HEK293 (cell line): ENCODE measurements at regions of chr11 and their contacts with region 1.

Region 1: GRCh38 chr11:62665075-62665598 is at the starts of genes C11orf98 and CSKMT:
- H3K4me3 ChIP-seq: peak within 1 kb of the TSS; percentile 89
- H3K27ac ChIP-seq: peak within 1 kb of the TSS; percentile 66
- H3K4me1 ChIP-seq: no peaks in the 10 kb centered on the region
- CTCF ChIP-seq: no peak

Region 2: DNA sequence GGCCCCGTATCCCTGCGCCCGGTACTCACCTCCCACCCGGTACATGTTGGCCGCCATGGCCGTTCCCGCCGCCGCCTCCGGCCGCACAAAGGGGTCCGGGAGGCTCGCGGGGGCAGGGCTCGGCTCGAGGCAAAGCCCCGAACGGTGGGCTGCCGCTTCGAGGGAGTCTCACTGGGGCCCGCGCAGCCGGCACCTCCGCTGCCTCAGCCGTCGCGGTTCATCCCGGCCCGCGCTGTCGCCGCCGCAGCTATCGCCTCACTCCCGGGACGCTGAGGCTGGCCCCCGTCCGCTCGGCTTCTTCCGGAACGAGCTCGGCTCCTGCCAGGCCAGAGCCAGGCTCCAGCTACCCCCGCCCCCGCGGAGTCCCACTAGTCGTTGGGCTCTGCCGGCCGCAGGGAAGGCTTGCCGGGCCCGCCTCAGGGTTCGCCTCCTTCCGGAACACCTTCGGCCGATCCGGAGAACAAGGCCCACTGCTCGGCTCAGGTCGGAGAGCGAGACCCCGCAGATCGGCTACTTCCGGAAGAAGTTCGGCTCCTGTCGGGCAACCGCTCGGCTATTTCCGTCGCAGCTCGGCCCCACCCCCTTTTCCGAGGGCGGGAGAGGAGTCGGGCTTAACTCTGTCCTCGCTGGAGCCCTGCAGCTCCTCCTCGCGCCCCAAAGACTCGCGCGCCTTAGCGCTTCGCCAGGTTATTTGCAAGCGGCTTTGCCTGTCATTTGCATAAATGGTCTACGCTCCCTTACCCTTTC is 63.6 kb before region 1 on chr11 and contains the start of gene MTA2:
- CTCF ChIA-PET with region 1: no interaction called
- POLR2A ChIA-PET with region 1: interaction called, 20 read pairs
- H3K4me3 ChIP-seq: peak within 1 kb of the TSS; percentile 91
- H3K27ac ChIP-seq: peak within 1 kb of the TSS; percentile 95
- H3K4me1 ChIP-seq: no peaks in the 10 kb centered on the region
- CTCF ChIP-seq: no peak

Region 3: DNA sequence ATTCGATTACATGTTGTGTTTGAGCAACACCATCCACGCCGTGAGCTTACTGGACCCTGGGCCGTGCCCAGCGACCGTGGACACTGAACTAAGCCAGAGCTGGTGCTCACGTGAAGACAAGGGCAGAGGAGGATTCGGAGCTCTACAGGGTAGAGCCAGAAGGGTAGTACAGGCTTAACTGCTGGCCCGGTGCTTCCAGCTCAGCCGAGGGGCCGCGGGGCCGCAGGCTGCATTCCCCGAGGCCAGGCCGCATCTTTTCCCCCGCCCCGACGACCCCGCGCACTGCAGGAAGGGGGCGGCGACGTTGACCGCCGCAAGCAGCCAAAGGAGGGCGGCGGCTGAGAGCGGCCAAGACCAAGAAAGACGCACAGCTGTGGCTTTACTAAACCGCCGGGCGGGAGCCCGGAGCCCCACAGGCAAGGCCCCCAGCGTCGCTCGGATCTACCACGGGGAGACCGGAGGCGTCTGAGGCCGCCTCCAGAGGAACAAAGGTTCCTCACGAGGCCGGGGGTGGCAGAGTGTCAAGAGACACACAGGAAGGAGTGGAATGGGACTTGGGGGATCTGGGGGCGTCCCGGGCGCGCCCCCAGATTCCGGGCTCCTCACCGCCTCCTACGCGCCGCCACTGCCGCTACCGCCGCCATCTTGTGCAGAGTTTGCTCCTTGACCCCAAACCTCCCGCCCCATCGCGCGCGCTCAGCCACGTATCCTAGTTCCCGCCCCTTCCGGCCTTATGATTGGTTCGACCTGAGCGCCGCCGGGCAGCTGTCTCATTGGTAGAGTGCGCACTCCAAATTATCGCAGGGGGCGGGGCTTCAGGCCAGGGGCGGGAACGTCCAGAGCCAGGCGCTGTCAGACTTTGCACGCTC is 18.9 kb before region 1 on chr11 and contains the start of gene GANAB:
- CTCF ChIA-PET with region 1: interaction called, 4 read pairs
- POLR2A ChIA-PET with region 1: interaction called, 79 read pairs
- H3K4me3 ChIP-seq: peak within 1 kb of the TSS; percentile 86
- H3K27ac ChIP-seq: peak within 1 kb of the TSS; percentile 83
- H3K4me1 ChIP-seq: peaks cover 3% of the 10 kb centered on the region; the same call in 1 of the 2 replicates
- CTCF ChIP-seq: 0 out of 2 replicates have a peak, but pooled peaks have one; percentile 12

Region 4: GRCh38 chr11:62678770-62679696 is 13.9 kb after region 1 on chr11 and contains the start of gene UBXN1:
- CTCF ChIA-PET with region 1: interaction called, 10 read pairs
- POLR2A ChIA-PET with region 1: interaction called, 67 read pairs
- H3K4me3 ChIP-seq: peak within 1 kb of the TSS; percentile 90
- H3K27ac ChIP-seq: peak within 1 kb of the TSS; percentile 62
- H3K4me1 ChIP-seq: peaks cover 8% of the 10 kb centered on the region
- CTCF ChIP-seq: no peak

Region 5: DNA sequence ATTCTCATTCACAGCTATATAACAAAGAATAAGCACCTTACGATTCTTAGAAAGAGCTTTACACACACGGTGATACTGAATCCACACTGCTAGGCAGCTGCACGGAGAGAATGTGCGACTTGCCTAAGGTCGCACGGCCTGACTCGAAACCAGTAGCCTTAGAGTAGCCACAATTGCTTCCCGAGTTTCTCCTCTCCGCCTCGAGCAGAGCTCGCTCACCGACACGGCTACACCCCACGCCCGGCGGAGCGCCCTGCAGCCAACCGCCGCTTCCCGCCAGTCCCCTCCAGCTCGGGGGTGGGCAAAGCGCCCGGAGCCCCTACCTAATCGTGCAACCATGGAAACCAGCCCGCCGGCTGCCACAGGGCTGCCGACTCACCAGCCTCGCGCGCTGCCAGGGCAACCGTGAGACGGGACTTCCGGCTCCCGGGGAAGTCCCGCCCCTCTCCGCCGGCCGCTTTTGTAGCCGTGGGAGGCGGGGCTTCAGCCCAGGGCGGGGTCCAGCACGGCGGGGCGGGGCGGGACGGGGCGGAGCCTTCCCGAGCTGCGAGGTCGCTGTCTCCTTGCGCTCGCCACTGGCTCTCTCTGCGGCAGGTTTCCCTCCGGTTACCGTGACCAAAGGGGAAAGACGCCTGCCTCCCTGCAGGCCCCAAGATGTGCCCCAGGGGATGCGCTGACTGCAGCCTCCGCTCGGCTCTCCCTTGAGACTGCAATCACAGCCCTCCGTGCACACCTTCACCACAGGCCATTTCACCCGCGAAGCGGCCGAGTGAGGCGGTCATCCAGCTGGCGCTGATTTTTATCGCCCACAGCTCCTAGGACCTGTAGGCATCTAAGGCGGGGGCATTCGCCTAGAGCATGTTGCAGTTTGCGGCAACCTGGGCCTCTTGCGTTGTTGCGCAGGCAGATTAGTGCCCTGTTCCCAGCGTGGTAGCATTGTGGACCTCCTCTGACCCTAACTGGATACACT is 41.0 kb after region 1 on chr11:
- CTCF ChIA-PET with region 1: interaction called, 3 read pairs
- POLR2A ChIA-PET with region 1: interaction called, 21 read pairs
- H3K4me3 ChIP-seq: peak overlapping the region; percentile 62
- H3K27ac ChIP-seq: peak overlapping the region; percentile 62
- H3K4me1 ChIP-seq: peaks cover 3% of the 10 kb centered on the region; the same call in 1 of the 2 replicates
- CTCF ChIP-seq: no peak

Region 6: GRCh38 chr11:62753736-62754603 is 88.8 kb after region 1 on chr11 and contains the start of gene ZBTB3:
- CTCF ChIA-PET with region 1: no interaction called
- POLR2A ChIA-PET with region 1: interaction called, 14 read pairs
- H3K4me3 ChIP-seq: peak within 1 kb of the TSS; percentile 73
- H3K27ac ChIP-seq: peak within 1 kb of the TSS; percentile 32; the same call in 1 of the 2 replicates
- H3K4me1 ChIP-seq: no peaks in the 10 kb centered on the region
- CTCF ChIP-seq: no peak